Activated naive CD4-positive, alpha-beta T cell treated with anti-CD3 and anti-CD28 coated beads, Interleukin-2, amount 10 ng/mL, durations not matched to agents 7 days and 5 days (primary cell): ENCODE measurements at regions of chr14 and their contacts with region 1.

Region 1: DNA sequence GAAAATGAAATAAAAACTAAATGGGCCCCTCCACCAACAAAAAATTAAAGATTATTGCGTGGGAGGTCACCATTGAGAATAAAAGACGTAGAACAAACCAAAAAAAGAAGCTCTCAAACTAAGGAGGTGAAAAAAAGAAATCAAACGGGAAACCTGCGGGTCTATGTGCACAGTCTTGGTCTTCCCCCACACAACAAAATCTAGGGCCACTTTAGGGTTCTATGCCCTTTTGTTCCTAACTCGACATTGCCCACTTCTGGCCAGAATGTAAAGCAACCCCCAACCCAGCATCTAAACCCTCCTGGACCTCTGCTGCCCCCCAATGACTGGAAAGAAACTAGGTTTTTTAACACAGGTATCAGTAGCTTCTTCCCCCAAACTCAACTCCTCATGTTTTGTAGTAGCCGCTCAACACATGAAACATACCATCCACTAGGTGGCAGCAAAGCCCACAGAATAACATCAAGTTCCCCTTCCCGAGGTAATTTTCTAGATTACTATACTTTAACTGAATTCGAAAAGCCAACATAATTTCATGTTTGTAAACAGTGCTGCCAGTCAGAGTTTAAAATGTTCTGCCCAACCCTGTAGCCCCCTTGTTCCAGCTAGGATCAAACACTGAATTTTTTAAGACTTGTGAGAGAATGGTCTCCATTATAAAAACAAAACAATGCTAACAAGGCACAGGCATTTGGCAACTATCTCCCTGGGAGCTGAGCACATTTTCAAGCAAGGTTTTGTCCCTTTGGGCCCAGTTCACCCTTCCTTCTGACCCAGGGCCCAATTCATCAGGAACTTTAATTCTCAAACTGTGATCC is 18.7 kb downstream of the DAD1 start:
- DNase-seq: peak; percentile 91
- H3K4me3 Mint-ChIP-seq: peak overlapping the region; percentile 79
- H3K27ac Mint-ChIP-seq: peak overlapping the region; percentile 98
- H3K4me1 Mint-ChIP-seq: peaks cover 59% of the 10 kb centered on the region
- H3K27me3 Mint-ChIP-seq: no peaks in the 10 kb centered on the region

Region 2: GRCh38 chr14:21825149-21825743 is 745.1 kb before region 1 on chr14:
- CTCF ChIA-PET with region 1: interaction called, 11 read pairs
- DNase-seq: peak; percentile 66
- H3K4me3 Mint-ChIP-seq: peak overlapping the region; percentile 62
- H3K27ac Mint-ChIP-seq: peak overlapping the region; percentile 60
- H3K4me1 Mint-ChIP-seq: peaks cover 9% of the 10 kb centered on the region
- H3K27me3 Mint-ChIP-seq: peaks cover 41% of the 10 kb centered on the region

Region 3: GRCh38 chr14:21997300-21997699 is 573.0 kb before region 1 on chr14:
- CTCF ChIA-PET with region 1: interaction called, 19 read pairs
- DNase-seq: peak; percentile 64
- H3K4me3 Mint-ChIP-seq: peak overlapping the region; percentile 95
- H3K27ac Mint-ChIP-seq: peak overlapping the region; percentile 97
- H3K4me1 Mint-ChIP-seq: peaks cover 34% of the 10 kb centered on the region
- H3K27me3 Mint-ChIP-seq: peaks cover 4% of the 10 kb centered on the region

Region 4: GRCh38 chr14:22190411-22191191 is 379.7 kb before region 1 on chr14:
- CTCF ChIA-PET with region 1: no interaction called
- DNase-seq: no peak
- H3K4me3 Mint-ChIP-seq: no peak overlapping the region
- H3K27ac Mint-ChIP-seq: no peak overlapping the region
- H3K4me1 Mint-ChIP-seq: no peaks in the 10 kb centered on the region
- H3K27me3 Mint-ChIP-seq: no peaks in the 10 kb centered on the region

Region 5: GRCh38 chr14:22536853-22537338 is 33.4 kb before region 1 on chr14:
- CTCF ChIA-PET with region 1: interaction called, 17 read pairs
- DNase-seq: peak; percentile 80
- H3K4me3 Mint-ChIP-seq: peak overlapping the region; percentile 71
- H3K27ac Mint-ChIP-seq: peak overlapping the region; percentile 89
- H3K4me1 Mint-ChIP-seq: peaks cover 97% of the 10 kb centered on the region
- H3K27me3 Mint-ChIP-seq: no peaks in the 10 kb centered on the region

Region 6: GRCh38 chr14:22589096-22589839 is 18.9 kb after region 1 on chr14 and contains the start of gene DAD1:
- CTCF ChIA-PET with region 1: interaction called, 116 read pairs
- DNase-seq: peak; percentile 99
- H3K4me3 Mint-ChIP-seq: peak within 1 kb of the TSS; percentile 98
- H3K27ac Mint-ChIP-seq: peak within 1 kb of the TSS; percentile 99
- H3K4me1 Mint-ChIP-seq: peaks cover 59% of the 10 kb centered on the region
- H3K27me3 Mint-ChIP-seq: peaks cover 16% of the 10 kb centered on the region

Region 7: DNA sequence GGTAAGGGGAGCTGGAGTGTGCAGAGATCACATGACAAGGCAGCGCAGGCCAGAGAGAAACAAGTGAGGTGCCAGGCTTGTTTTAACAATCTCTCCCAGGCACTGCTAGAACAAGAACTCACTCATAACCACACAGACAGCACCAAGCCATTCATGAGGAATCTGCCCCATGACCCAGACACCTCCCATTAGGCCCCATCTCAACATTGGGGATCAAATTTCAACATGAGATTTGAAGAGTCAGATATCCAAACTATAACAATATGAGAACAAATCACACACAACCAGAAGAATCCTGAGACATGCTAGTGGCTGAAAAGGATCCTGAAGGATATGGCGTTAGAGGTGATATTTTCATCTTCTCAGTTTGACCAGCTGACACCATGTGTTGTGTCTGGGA is 51.9 kb after region 1 on chr14:
- CTCF ChIA-PET with region 1: no interaction called
- DNase-seq: no peak
- H3K4me3 Mint-ChIP-seq: no peak overlapping the region
- H3K27ac Mint-ChIP-seq: no peak overlapping the region
- H3K4me1 Mint-ChIP-seq: no peaks in the 10 kb centered on the region
- H3K27me3 Mint-ChIP-seq: peaks cover 17% of the 10 kb centered on the region

Region 8: GRCh38 chr14:22653012-22653621 is 82.8 kb after region 1 on chr14:
- CTCF ChIA-PET with region 1: interaction called, 62 read pairs
- DNase-seq: peak; percentile 70
- H3K4me3 Mint-ChIP-seq: no peak overlapping the region
- H3K27ac Mint-ChIP-seq: no peak overlapping the region
- H3K4me1 Mint-ChIP-seq: no peaks in the 10 kb centered on the region
- H3K27me3 Mint-ChIP-seq: no peaks in the 10 kb centered on the region

Region 9: DNA sequence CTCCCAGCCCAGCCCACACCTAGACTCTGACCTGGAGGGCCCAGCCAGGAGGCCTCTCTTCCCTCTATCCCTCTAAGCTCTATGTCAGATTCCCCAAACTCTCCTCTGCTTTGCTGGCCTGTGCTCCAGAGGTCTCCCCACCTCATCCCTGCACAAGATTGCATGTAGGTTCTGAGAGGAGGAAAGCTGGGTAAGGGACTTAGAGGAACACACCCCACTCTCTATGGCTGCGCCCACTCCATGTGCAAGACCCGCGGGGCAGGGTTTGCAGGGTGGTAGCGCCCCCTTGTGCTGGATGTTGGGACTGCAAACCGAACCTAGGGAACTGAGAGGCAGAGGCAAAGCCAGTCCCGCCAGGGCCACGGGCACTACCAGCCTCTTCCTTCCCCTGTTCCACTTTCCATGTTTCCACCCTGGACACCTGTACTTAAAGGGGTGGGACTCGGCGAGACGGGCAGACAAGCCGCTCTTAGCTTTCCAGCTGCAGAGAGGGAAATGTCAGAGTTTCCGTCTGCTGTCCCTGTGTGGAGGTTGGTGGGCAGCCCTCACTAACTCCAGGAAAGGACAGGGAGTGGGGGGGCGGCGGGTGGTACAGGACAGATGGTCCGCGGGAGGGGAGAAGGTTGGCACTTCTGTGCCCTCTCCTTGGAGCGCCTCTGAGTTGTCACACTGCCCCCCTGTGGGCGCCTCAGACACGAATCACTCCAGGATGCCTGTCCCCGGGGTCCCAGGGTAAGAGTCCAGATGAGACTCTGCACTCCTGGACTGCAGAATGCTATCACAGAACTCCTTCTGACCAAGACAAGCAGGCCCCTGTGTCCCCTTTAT is 282.8 kb after region 1 on chr14:
- CTCF ChIA-PET with region 1: interaction called, 105 read pairs
- DNase-seq: peak; percentile 93
- H3K4me3 Mint-ChIP-seq: peak overlapping the region; percentile 72
- H3K27ac Mint-ChIP-seq: peak overlapping the region; percentile 49
- H3K4me1 Mint-ChIP-seq: peaks cover 39% of the 10 kb centered on the region
- H3K27me3 Mint-ChIP-seq: peaks cover 77% of the 10 kb centered on the region